ENCODE measurements at regions of chr13 and their contacts with region 1.

Region 1: DNA sequence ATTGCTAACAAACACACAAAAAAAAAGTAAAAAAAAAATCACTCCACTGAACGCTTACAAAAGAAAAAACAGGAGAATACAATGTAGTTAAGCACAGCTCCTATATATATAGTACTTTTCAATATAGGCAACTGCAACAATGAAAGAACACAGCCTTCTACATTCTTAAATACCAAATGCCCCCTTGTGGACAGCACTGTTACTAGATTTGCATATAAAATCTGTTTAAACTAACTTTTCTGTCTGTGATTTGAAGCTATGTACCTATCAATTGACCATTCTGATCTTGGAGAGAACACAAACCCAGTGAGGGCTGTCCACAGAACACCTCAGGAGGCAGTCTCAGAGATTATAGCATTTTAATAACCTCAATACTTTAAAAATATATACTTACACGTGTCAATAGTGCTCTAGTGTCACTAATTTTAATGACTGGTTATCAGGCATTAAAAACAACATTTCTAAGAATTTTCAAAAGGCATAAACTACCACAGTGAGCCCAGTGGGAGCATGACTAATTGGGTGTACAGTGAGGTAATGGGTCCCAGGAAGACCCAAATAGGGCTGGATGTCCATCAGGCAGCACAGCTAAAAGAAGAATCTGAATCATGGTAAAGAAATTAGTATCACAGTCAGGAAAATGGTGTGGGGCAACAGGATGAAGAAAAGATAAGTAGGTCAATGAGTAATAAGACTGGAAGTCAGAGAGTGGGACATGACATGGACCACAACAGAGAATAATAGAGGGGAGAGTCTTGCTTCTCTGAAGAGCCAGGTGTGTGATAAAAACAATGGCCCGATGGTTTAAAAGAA is 22.2 kb downstream of the CCDC169 start:
- DNase-seq: no peak
- H3K4me3 ChIP-seq: no peak overlapping the region
- H3K27ac ChIP-seq: no peak overlapping the region
- H3K4me1 ChIP-seq: no peaks in the 10 kb centered on the region
- H3K27me3 ChIP-seq: no peaks in the 10 kb centered on the region
- CTCF ChIP-seq: peak; percentile 71

Region 2: DNA sequence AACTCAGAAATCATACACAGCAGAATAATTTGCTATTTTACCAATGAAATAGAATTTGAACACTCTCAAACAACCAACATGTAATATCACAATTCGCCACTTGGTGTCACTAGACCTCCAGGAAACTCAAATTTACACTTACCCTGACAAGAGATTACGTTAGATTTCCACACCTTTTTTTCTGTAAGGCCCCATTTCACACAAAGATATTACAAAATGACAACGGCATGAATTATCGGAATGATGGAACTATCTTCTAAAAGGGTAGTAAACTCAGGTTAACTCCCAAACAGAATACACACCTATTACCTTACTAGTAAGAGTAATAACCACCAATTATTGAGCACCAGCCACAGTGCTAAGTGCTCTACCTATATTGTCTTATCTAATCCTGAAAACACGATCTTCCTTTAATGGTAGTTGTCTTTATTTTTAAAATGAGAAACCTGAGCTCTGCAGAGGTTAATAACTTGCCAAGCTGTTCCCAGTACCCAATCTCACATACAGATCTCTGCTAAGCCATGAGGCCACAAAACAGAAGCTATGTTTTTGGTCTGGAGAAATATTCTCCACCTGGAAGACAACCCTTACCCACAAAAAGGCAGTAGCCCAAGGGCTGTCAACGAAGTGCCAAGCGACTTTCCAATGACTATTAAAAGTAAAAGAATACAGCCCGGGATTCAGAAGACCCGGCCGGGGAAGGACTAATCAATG is 296.6 kb before region 1 on chr13:
- intact Hi-C with region 1: loop called (anchors 1 kb)
- DNase-seq: no peak
- H3K4me3 ChIP-seq: no peak overlapping the region
- H3K27ac ChIP-seq: peak overlapping the region; percentile 75
- H3K4me1 ChIP-seq: peaks cover 10% of the 10 kb centered on the region
- H3K27me3 ChIP-seq: no peaks in the 10 kb centered on the region
- CTCF ChIP-seq: peak; percentile 85